ENCODE measurements at regions of chr15 and their contacts with region 1.

Region 1: DNA sequence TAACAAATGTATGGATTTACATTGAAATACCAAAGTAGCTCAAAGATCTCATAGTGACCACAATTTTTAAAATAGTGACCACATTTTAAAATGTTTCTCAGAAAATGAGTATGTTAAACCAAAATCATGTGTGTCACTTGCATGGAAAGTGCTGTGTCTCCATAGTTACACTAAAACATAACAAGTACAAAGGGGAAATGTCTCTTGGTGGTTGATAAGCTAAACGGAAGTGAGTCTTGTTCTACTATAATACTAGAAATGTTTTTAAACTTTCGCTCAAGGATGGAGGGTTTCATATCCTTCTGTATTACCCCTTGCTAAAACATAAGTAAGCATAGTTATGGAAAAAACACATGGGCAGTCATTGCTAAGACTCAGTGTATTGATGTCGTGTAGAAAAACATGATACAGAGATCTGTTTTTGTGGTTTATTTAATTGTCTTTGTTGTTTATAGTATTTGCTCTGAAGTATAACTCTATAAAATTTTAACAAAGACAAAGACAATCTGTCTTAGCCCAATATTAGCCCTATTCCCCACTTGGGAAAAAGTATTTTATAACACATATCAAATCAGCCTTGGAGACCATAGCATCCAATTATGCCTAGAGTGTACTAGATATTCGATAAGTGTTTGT is 27.0 kb upstream of the DENND4A start:
- DNase-seq: no peak
- H3K4me3 Mint-ChIP-seq: peak overlapping the region; percentile 59
- H3K27ac Mint-ChIP-seq: peak overlapping the region; percentile 85
- H3K4me1 Mint-ChIP-seq: peaks cover 44% of the 10 kb centered on the region
- H3K27me3 Mint-ChIP-seq: no peaks in the 10 kb centered on the region

Region 2: DNA sequence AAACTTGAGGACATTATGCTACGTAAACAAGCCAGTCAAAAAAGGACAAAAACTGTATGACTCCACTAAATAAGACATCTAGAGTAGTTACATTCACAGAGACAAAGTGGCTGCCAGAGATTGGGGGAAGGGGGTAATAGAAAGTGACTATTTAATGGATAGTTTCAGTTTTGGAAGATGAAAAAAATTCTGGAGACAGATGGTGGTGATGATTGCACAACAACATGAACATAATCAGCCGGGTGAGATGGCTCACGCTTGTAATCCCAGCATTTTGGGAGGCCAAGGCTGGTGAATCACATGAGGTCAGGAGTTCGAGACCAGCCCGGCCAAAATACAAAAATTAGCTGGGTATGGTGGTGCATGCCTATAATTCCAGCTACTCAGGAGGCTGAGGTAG is 342.1 kb before region 1 on chr15:
- intact Hi-C with region 1: no loop called
- DNase-seq: no peak
- H3K4me3 Mint-ChIP-seq: no peak overlapping the region
- H3K27ac Mint-ChIP-seq: no peak overlapping the region
- H3K4me1 Mint-ChIP-seq: peaks cover 4% of the 10 kb centered on the region
- H3K27me3 Mint-ChIP-seq: no peaks in the 10 kb centered on the region

Region 3: GRCh38 chr15:65762914-65763787 is 55.9 kb before region 1 on chr15:
- intact Hi-C with region 1: loop called (anchors 2 kb)
- DNase-seq: no peak
- H3K4me3 Mint-ChIP-seq: no peak overlapping the region
- H3K27ac Mint-ChIP-seq: peak overlapping the region; percentile 46
- H3K4me1 Mint-ChIP-seq: peaks cover 39% of the 10 kb centered on the region
- H3K27me3 Mint-ChIP-seq: no peaks in the 10 kb centered on the region